H1 (cell line): ENCODE measurements at regions of chr20 and their contacts with region 1.

Region 1: GRCh38 chr20:17287503-17287902 is 60.7 kb downstream of the PCSK2 start:
- DNase-seq: peak in 1 of 2 experiments; percentile 66
- H3K4me3 ChIP-seq: no peak overlapping the region
- H3K27ac ChIP-seq: no peak overlapping the region
- H3K4me1 ChIP-seq: peaks cover 2 to 5% (median 4%) of the 10 kb centered on the region in 4 experiments; a peak in 4 of 7 replicates
- H3K27me3 ChIP-seq: peaks cover 0 to 1% (median 0%) of the 10 kb centered on the region in 4 experiments; a peak in 2 of 7 replicates
- CTCF ChIP-seq: peak; percentile 43 to 70 (median 62)
- EP300 ChIP-seq: no peak
- POLR2A ChIP-seq: no peak
- RAD21 ChIP-seq: peak; percentile 14 to 27; a peak in 2 of 4 replicates

Region 2: GRCh38 chr20:17177341-17177740 is 110.2 kb before region 1 on chr20:
- CTCF ChIA-PET with region 1: no interaction called
- POLR2A ChIA-PET with region 1: no interaction called
- DNase-seq: no peak
- H3K4me3 ChIP-seq: no peak overlapping the region
- H3K27ac ChIP-seq: no peak overlapping the region
- H3K4me1 ChIP-seq: peaks cover 0 to 4% (median 0%) of the 10 kb centered on the region in 4 experiments; a peak in 1 of 7 replicates
- H3K27me3 ChIP-seq: no peaks in the 10 kb centered on the region
- CTCF ChIP-seq: peak in 1 of 3 experiments; percentile 2; a peak in 1 of 4 replicates
- EP300 ChIP-seq: no peak
- POLR2A ChIP-seq: no peak
- RAD21 ChIP-seq: no peak

Region 3: GRCh38 chr20:17298171-17298570 is 10.7 kb after region 1 on chr20:
- CTCF ChIA-PET with region 1: interaction called, 35 read pairs
- POLR2A ChIA-PET with region 1: no interaction called
- DNase-seq: no peak
- H3K4me3 ChIP-seq: no peak overlapping the region
- H3K27ac ChIP-seq: no peak overlapping the region
- H3K4me1 ChIP-seq: no peaks in the 10 kb centered on the region
- H3K27me3 ChIP-seq: no peaks in the 10 kb centered on the region
- CTCF ChIP-seq: no peak
- EP300 ChIP-seq: no peak
- POLR2A ChIP-seq: no peak
- RAD21 ChIP-seq: no peak

Region 4: DNA sequence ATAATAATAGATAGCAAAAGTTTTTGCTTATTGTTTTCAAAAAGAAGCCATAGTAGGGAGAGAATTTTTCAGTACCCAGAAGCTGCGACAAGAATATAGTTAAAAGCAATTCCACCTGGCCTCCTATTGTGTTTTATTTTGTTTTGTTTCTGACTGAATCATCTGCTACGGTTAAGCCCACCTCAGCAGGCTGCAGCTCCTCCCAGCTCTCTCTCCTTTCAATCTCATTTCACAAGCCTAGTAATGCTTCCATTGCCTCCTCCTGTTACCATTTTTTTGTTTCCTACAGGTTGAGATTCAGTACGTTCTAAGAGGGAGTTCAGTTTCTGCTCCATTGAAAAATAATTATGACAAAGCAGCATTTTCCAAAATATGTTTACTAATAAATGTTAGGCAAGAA is 17.3 kb after region 1 on chr20:
- CTCF ChIA-PET with region 1: interaction called, 10 read pairs
- POLR2A ChIA-PET with region 1: no interaction called
- DNase-seq: no peak
- H3K4me3 ChIP-seq: no peak overlapping the region
- H3K27ac ChIP-seq: no peak overlapping the region
- H3K4me1 ChIP-seq: no peaks in the 10 kb centered on the region; a peak in 2 of 7 replicates
- H3K27me3 ChIP-seq: no peaks in the 10 kb centered on the region
- CTCF ChIP-seq: no peak
- EP300 ChIP-seq: no peak
- POLR2A ChIP-seq: no peak
- RAD21 ChIP-seq: no peak